K562 (cell line): ENCODE measurements at regions of chr21 and their contacts with region 1.

Region 1: DNA sequence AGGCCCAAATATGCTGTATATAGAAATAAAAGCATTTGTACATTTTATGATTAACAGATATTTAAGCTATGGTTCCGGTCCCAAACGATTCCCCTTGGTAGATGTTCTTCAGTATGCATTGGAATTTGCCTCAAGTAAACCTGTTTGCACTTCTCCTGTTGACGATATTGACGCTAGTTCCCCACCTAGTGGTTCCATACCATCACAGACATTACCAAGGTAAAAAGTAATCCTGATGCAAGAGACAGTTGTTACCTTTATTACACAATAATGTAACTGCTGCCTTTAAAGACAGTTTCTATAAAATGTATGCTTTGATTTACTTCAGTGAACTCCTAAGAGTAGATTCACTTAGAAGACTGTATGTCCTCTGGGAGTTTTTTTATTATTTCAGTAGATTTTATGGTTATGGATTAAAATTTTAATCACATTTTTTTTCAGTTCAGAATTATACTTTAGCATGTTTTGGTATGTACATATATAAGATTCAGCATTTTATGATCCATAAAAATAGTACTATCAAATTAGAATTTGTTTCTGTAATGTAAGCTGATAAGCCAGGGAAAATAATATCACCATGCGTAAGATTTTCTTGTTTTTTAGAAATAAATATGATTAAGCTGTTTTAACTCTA is 96.5 kb downstream of the USP25 start:
- DNase-seq: peak; percentile 13 to 64 (median 31)
- ATAC-seq: peak; percentile 94
- H3K4me3 ChIP-seq: no peak overlapping the region
- H3K27ac ChIP-seq: no peak overlapping the region
- H3K4me1 ChIP-seq: no peaks in the 10 kb centered on the region
- H3K27me3 ChIP-seq: no peaks in the 10 kb centered on the region
- CTCF ChIP-seq: peak; percentile 38 to 68 (median 61)
- EP300 ChIP-seq: no peak
- POLR2A ChIP-seq: no peak
- RAD21 ChIP-seq: peak; percentile 68 to 83

Region 2: DNA sequence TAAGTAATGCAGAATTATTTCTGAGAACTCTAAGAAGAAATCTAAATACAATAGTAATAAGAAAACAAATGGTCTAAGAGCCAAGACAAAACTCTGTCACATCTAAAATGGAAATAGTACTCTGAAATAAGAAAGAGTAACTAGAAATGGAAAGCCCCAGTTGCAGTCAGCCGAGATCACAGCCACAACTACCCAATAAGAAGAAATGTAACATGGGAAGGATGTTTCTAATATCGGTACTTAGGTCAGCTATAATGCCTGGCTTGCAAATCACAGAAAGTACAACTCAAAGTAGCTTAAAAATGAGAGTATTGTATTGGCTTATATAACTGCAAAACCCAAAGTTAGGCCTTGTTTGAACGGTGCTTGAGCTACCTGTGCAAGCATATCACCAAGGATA is 155.1 kb before region 1 on chr21:
- CTCF ChIA-PET with region 1: no interaction called
- POLR2A ChIA-PET with region 1: no interaction called
- in situ Hi-C with region 1: no loop called
- intact Hi-C with region 1: loop called (anchors 10 kb)
- DNase-seq: no peak
- ATAC-seq: no peak
- H3K4me3 ChIP-seq: no peak overlapping the region
- H3K27ac ChIP-seq: no peak overlapping the region
- H3K4me1 ChIP-seq: no peaks in the 10 kb centered on the region
- H3K27me3 ChIP-seq: no peaks in the 10 kb centered on the region; a peak in 1 of 5 replicates
- CTCF ChIP-seq: no peak
- EP300 ChIP-seq: no peak
- POLR2A ChIP-seq: no peak
- RAD21 ChIP-seq: no peak

Region 3: GRCh38 chr21:15729674-15730483 is 96.4 kb before region 1 on chr21 and contains the start of gene USP25:
- CTCF ChIA-PET with region 1: no interaction called
- POLR2A ChIA-PET with region 1: no interaction called
- in situ Hi-C with region 1: no loop called
- intact Hi-C with region 1: loop called (anchors 1 kb)
- DNase-seq: peak; percentile 91 to 97 (median 97)
- ATAC-seq: peak; percentile 88
- H3K4me3 ChIP-seq: peak within 1 kb of the TSS; percentile 72
- H3K27ac ChIP-seq: peak within 1 kb of the TSS; percentile 90
- H3K4me1 ChIP-seq: peaks cover 4 to 6% of the 10 kb centered on the region in 2 experiments; a peak in 2 of 5 replicates
- H3K27me3 ChIP-seq: no peaks in the 10 kb centered on the region
- CTCF ChIP-seq: peak in 2 of 3 experiments; percentile 33; a peak in 3 of 6 replicates
- EP300 ChIP-seq: no peak
- POLR2A ChIP-seq: peak; percentile 63; the same call in 1 of the 2 replicates
- RAD21 ChIP-seq: peak in 1 of 2 experiments; percentile 50; a peak in 3 of 4 replicates
- polyA plus RNA-seq, gene USP25: 7.8 to 8.0 TPM